ENCODE measurements at regions of chr13 and their contacts with region 1.

Region 1: DNA sequence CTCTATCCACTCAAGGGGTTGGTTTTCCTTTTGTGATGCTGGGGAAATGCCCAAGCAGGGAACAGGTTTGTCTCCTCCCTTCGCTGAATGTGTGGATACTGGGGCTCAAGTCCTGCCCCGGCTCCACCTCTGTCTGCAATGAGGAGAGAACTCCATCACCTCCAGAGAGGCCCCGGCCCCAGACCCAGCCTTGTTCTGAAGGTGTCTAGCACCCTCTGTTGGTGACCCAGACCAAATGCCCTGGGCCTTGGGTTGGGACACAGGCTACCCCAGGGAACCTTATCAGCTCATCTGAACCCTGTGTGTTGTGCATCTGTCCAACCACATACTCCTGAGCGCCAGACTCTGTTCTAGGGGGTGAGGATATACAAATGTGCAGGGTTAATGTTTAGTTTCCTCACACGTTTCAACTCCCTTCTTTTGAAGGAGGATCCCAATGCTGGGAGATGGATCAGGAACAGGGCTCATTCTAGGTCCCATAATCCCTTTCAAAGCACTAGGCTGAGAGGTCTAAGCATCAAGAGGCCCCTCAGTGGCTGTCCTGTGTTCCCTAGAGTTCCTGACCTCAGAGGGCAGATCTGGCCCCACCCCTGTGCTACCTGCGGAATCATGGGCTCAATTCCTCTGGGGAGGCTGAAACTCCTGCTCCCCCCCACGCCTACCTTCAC is 112.5 kb upstream of the SLC7A1 start:
- H3K4me3 ChIP-seq: no peak overlapping the region
- H3K27ac ChIP-seq: no peak overlapping the region
- H3K4me1 ChIP-seq: no peaks in the 10 kb centered on the region
- CTCF ChIP-seq: no peak

Region 2: GRCh38 chr13:29454911-29455481 is 253.0 kb before region 1 on chr13:
- CTCF ChIA-PET with region 1: no interaction called
- POLR2A ChIA-PET with region 1: no interaction called
- H3K4me3 ChIP-seq: no peak overlapping the region
- H3K27ac ChIP-seq: no peak overlapping the region
- H3K4me1 ChIP-seq: no peaks in the 10 kb centered on the region
- CTCF ChIP-seq: no peak

Region 3: GRCh38 chr13:29508130-29508875 is 199.7 kb before region 1 on chr13:
- CTCF ChIA-PET with region 1: interaction called, 19 read pairs
- POLR2A ChIA-PET with region 1: no interaction called
- H3K4me3 ChIP-seq: no peak overlapping the region
- H3K27ac ChIP-seq: no peak overlapping the region
- H3K4me1 ChIP-seq: no peaks in the 10 kb centered on the region; the same call in 1 of the 2 replicates
- CTCF ChIP-seq: peak; percentile 59

Measured in HEK293 (cell line).